Activated T-helper 1 cell treated with anti-CD3 and anti-CD28 coated beads, Interleukin-12 subunit alpha, Interleukin-12 subunit beta, Interleukin-2, Interleukin-4 antibody, amounts not matched to agents 30 ng/mL and 10 ng/mL and 1 ng/mL, durations not matched to agents 14 hours and 24 hours and 36 hours (primary cell): ENCODE measurements at regions of chr16 and their contacts with region 1.

Region 1: DNA sequence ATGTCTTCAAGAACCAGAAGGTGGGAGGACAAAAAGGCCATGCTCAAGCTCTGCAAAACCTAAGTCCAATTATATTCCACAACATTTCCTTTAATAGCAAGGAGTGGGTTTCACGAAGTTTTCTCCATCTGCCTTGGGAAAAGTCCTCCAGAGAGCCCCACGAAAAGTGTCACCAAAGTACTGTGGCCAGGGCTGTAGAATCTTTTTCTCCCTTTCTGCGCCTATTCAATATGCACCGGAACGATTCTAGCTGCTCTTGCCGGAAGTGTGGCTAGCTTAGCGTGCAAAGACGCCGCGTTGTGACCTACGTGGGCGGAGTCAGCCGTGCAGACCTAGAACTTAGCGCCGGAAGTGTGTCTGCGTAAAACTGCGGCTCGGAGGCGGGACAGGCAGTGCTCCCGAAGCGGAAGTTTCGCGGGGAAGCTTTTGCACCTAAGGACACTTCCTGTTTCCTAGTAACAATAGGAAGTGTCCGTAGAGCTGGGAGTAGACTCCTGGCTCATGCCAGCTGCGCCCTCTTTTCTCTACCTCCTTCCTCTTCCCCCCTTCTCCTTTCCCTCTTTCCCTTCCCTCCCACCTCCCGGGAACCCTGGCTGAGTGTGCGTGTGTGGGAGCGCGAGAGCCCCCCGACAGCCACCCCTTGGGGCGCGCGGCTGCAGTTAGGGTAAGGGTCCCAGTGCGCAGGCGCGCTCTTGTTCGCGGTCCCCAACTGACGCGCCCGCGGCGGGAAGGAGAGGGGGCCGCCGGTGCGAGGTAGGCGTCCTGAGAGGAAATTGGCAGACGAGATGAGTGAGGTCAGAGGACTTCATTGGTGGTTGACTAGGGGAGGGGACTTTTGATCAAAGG is at the starts of genes ZNF646 and ZNF668:
- DNase-seq: peak; percentile 98
- H3K4me3 Mint-ChIP-seq: peak within 1 kb of the TSS; percentile 99
- H3K27ac Mint-ChIP-seq: peak within 1 kb of the TSS; percentile 96
- H3K4me1 Mint-ChIP-seq: peaks cover 35% of the 10 kb centered on the region
- H3K27me3 Mint-ChIP-seq: no peaks in the 10 kb centered on the region
- total RNA-seq, gene ZNF646: 25.3 and 26.1 TPM in 2 replicates
- total RNA-seq, gene ZNF668: 14.9 and 15.1 TPM in 2 replicates

Region 2: GRCh38 chr16:30874821-30875717 is 199.1 kb before region 1 on chr16:
- intact Hi-C with region 1: loop called (anchors 1 kb)
- DNase-seq: peak; percentile 86
- H3K4me3 Mint-ChIP-seq: peak overlapping the region; percentile 97
- H3K27ac Mint-ChIP-seq: peak overlapping the region; percentile 94
- H3K4me1 Mint-ChIP-seq: peaks cover 23% of the 10 kb centered on the region
- H3K27me3 Mint-ChIP-seq: no peaks in the 10 kb centered on the region

Region 3: GRCh38 chr16:30948667-30949649 is 125.2 kb before region 1 on chr16 and contains the start of gene ORAI3:
- intact Hi-C with region 1: no loop called
- DNase-seq: peak; percentile 37
- H3K4me3 Mint-ChIP-seq: peak within 1 kb of the TSS; percentile 92
- H3K27ac Mint-ChIP-seq: peak within 1 kb of the TSS; percentile 76
- H3K4me1 Mint-ChIP-seq: peaks cover 10% of the 10 kb centered on the region
- H3K27me3 Mint-ChIP-seq: no peaks in the 10 kb centered on the region
- total RNA-seq, gene ORAI3: 11.1 and 11.5 TPM in 2 replicates

Region 4: DNA sequence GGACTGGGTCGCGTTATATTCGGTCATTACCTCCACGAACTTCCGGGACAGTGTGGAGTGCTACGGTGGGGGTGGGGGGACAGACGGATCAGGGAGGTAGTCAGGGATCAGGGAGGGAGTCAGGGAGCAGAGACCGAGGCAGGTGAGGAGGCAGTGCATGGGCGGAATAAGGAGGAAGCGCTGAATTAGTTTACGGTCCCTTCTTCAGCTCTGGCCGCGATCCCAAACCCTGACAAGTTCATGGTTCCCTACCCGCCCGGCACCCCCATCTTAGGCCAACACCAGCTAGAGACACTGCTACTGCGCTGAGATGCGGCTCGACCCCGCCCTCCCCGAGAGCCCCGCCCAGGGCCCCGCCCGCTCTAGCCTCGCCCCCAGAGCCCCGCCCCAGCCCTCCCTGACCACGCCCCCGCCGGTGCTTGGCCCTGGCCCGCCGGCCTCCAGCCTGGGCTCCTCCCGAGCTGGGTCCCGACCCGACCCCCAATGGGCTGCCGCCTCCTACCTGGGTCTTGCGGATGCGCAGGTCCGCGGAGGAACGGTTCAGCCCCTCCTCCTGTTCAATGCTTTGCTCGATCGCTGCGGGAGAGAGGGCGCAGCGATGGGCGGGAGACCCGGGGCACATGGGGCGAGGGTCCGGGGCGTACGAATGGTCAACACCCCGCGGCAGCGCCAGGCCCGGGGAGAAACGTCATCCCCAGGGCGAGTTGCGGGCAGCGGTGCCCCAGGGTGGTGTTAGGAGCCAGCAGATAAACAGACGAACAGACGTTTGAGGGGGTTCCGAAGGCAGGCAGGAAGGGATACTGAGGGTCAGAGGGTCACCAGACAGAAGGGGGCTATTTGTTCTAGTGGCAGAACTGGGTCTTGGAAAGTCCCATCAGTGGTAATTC is 76.9 kb before region 1 on chr16:
- intact Hi-C with region 1: loop called (anchors 1 kb)
- DNase-seq: peak; percentile 66
- H3K4me3 Mint-ChIP-seq: peak overlapping the region; percentile 74
- H3K27ac Mint-ChIP-seq: peak overlapping the region; percentile 44
- H3K4me1 Mint-ChIP-seq: peaks cover 11% of the 10 kb centered on the region
- H3K27me3 Mint-ChIP-seq: peaks cover 18% of the 10 kb centered on the region

Region 5: DNA sequence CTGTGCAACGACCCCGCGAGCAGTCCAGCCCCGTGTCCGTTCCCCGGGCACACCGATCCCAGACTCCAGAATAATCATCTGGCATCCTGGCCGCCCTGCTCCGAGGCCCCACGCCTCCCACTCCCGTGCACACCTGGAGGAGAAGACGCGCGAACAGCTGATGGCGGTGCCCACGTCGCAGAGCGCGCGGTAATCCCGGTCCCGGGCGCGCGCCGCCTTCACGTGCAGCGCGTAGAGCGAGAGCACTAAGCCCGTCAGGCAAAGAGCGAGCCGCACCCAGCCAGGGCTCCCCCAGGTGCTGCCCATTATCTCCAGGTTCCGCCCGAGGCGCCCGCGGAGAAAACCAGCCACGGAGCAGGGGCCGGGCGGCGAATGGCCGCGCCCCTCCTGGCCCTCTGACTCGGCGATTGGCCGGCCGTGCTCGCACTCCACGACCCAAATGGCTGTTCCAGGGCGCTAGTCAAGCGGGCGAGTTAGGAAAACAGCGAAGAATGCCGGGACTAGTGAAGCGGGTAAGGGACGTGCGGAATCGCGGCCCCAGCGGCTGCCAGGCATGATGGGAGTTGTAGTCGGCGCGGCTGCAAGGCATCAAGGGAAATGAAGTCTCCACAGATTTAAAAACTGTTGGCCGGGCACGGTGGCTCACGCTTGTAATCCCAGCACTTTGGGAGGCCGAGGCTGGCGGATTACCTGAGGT is 20.4 kb after region 1 on chr16 and contains the start of gene VKORC1:
- intact Hi-C with region 1: loop called (anchors 1 kb)
- DNase-seq: peak; percentile 84
- H3K4me3 Mint-ChIP-seq: peak within 1 kb of the TSS; percentile 95
- H3K27ac Mint-ChIP-seq: peak within 1 kb of the TSS; percentile 82
- H3K4me1 Mint-ChIP-seq: peaks cover 27% of the 10 kb centered on the region
- H3K27me3 Mint-ChIP-seq: no peaks in the 10 kb centered on the region
- total RNA-seq, gene VKORC1: 47.3 and 53.0 TPM in 2 replicates

Region 6: GRCh38 chr16:31117391-31118197 is 43.4 kb after region 1 on chr16 and contains the start of gene KAT8:
- intact Hi-C with region 1: loop called (anchors 1 kb)
- DNase-seq: peak; percentile 95
- H3K4me3 Mint-ChIP-seq: peak within 1 kb of the TSS; percentile 88
- H3K27ac Mint-ChIP-seq: peak within 1 kb of the TSS; percentile 92
- H3K4me1 Mint-ChIP-seq: peaks cover 19% of the 10 kb centered on the region
- H3K27me3 Mint-ChIP-seq: no peaks in the 10 kb centered on the region
- total RNA-seq, gene KAT8: 55.4 and 58.2 TPM in 2 replicates

Region 7: DNA sequence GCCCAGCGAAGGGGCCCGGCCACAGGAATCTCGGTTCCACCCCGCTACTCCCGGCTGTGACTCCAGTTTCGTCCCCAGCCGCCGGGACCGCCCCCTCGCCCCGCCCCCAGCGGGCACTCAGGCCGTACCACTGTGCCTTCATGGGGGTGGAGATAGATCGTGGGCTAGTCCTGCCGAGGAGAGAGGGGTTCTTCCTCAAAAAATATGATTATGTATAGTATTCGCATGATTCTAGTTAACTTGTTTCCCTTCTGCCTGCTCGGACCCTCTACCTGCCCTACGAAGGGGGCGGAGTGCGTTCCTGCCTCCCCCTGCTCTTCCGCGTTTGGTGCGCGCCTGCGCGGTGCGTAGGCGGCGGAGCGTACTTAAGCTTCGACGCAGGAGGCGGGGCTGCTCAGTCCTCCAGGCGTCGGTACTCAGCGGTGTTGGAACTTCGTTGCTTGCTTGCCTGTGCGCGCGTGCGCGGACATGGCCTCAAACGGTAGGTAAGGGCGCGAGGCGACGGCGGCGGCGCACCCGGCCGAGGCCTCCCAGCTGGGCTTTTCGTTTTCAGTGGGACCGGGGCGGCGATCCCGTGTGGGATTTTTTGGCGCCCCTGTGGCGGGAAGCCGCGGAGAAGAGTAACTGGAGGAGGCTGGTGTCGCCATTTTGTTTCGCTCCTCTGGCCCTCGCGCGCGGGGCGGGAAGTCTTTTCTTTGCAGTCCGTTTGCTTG is 105.7 kb after region 1 on chr16 and contains the start of gene FUS:
- intact Hi-C with region 1: loop called (anchors 1 kb)
- DNase-seq: peak; percentile 88
- H3K4me3 Mint-ChIP-seq: peak within 1 kb of the TSS; percentile 98
- H3K27ac Mint-ChIP-seq: peak within 1 kb of the TSS; percentile 99
- H3K4me1 Mint-ChIP-seq: peaks cover 54% of the 10 kb centered on the region
- H3K27me3 Mint-ChIP-seq: no peaks in the 10 kb centered on the region
- total RNA-seq, gene FUS: 950 and 955 TPM in 2 replicates

Region 8: GRCh38 chr16:31215287-31216162 is 141.3 kb after region 1 on chr16:
- intact Hi-C with region 1: no loop called
- DNase-seq: no peak
- H3K4me3 Mint-ChIP-seq: peak overlapping the region; percentile 74
- H3K27ac Mint-ChIP-seq: no peak overlapping the region
- H3K4me1 Mint-ChIP-seq: peaks cover 23% of the 10 kb centered on the region
- H3K27me3 Mint-ChIP-seq: peaks cover 31% of the 10 kb centered on the region

Region 9: GRCh38 chr16:31382485-31383161 is 308.4 kb after region 1 on chr16:
- intact Hi-C with region 1: no loop called
- DNase-seq: peak; percentile 60
- H3K4me3 Mint-ChIP-seq: no peak overlapping the region
- H3K27ac Mint-ChIP-seq: no peak overlapping the region
- H3K4me1 Mint-ChIP-seq: peaks cover 31% of the 10 kb centered on the region
- H3K27me3 Mint-ChIP-seq: peaks cover 3% of the 10 kb centered on the region